H1 (cell line): ENCODE measurements at regions of chr5 and their contacts with region 1.

Region 1: DNA sequence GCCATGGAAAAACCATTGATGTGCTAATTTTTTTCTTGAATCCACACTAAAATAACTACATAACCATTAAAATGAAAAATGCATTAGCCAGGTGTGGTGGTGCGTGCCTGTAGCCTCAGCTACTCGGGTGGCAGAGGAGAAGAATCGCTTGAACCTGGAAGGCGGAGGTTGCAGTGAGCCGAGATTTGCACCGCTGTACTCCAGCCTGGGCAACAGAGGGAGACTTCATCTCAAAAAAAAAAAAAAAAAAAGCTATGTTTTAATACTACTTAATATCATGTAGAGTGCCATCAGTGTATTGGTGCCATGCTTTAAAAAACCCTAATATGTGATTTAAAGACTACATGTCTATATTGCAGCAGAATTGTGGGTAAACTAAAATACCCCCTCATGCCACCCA is 58.9 kb downstream of the NDFIP1 start:
- DNase-seq: no peak
- H3K4me3 ChIP-seq: no peak overlapping the region
- H3K27ac ChIP-seq: no peak overlapping the region
- H3K4me1 ChIP-seq: no peaks in the 10 kb centered on the region; a peak in 2 of 7 replicates
- H3K27me3 ChIP-seq: no peaks in the 10 kb centered on the region
- CTCF ChIP-seq: peak in 2 of 3 experiments; percentile 12 to 15; a peak in 3 of 4 replicates
- EP300 ChIP-seq: no peak
- POLR2A ChIP-seq: no peak
- RAD21 ChIP-seq: peak; percentile 39 to 50; a peak in 3 of 4 replicates

Region 2: GRCh38 chr5:142186857-142187594 is 19.6 kb after region 1 on chr5:
- CTCF ChIA-PET with region 1: interaction called, 12 read pairs
- POLR2A ChIA-PET with region 1: interaction called, 4 read pairs
- DNase-seq: no peak
- H3K4me3 ChIP-seq: no peak overlapping the region
- H3K27ac ChIP-seq: no peak overlapping the region
- H3K4me1 ChIP-seq: peaks cover 5 to 12% (median 6%) of the 10 kb centered on the region in 4 experiments; a peak in 6 of 7 replicates
- H3K27me3 ChIP-seq: no peaks in the 10 kb centered on the region
- CTCF ChIP-seq: peak in 1 of 3 experiments; percentile 2; a peak in 1 of 4 replicates
- EP300 ChIP-seq: no peak
- POLR2A ChIP-seq: no peak
- RAD21 ChIP-seq: no peak